ENCODE measurements at regions of chr6 and their contacts with region 1.

Region 1: GRCh38 chr6:56370561-56371211 is 123.3 kb upstream of the COL21A1 start:
- DNase-seq: peak; percentile 99
- H3K4me3 ChIP-seq: peak overlapping the region in 1 of 3 experiments; percentile 52
- H3K27ac ChIP-seq: peak overlapping the region; percentile 99
- H3K4me1 ChIP-seq: peaks cover 57% of the 10 kb centered on the region
- H3K27me3 ChIP-seq: no peaks in the 10 kb centered on the region
- CTCF ChIP-seq: no peak
- POLR2A ChIP-seq: no peak

Region 2: DNA sequence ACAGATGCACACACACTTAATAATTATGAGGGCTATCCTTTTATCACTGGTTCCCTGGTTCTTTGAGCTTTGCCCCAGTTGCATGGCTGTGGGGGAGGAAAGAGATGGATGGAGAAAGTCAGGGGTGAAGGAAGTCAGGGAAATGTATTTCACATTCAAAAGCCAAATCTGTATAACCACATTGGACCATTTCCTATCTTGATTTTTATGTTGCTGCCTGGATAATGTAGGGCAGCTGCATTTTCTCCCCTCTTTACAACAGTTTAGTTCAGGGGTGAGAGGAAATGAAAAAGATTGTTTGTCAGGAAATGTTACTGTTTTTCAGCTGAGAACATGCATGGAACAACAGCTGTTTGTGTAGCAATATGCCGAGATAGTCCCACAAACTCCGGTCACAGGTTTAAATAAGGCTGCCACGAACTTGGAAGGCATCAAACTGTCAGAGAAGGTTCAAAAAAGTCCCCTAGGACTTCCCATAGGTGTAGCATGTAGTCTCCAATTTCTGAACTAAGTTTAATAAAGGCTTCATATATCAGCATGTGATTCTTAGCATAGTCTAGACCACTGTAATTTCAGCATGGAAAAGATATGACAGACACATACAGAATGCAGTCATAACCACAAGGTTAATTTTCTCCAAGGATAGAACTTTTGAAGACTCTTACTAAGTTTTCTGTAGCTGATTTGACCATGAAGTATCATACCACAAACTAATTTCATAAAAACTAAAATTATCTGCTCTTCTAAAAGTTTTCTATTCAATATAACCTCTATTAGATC is 41.2 kb before region 1 on chr6:
- CTCF ChIA-PET with region 1: no interaction called
- POLR2A ChIA-PET with region 1: no interaction called
- dilution Hi-C with region 1: no loop called
- intact Hi-C with region 1: loop called (anchors 1 kb)
- DNase-seq: peak; percentile 97
- H3K4me3 ChIP-seq: peak overlapping the region in 1 of 3 experiments; percentile 41
- H3K27ac ChIP-seq: peak overlapping the region; percentile 60
- H3K4me1 ChIP-seq: peaks cover 21% of the 10 kb centered on the region
- H3K27me3 ChIP-seq: no peaks in the 10 kb centered on the region
- CTCF ChIP-seq: no peak
- POLR2A ChIP-seq: peak; percentile 49

Region 3: DNA sequence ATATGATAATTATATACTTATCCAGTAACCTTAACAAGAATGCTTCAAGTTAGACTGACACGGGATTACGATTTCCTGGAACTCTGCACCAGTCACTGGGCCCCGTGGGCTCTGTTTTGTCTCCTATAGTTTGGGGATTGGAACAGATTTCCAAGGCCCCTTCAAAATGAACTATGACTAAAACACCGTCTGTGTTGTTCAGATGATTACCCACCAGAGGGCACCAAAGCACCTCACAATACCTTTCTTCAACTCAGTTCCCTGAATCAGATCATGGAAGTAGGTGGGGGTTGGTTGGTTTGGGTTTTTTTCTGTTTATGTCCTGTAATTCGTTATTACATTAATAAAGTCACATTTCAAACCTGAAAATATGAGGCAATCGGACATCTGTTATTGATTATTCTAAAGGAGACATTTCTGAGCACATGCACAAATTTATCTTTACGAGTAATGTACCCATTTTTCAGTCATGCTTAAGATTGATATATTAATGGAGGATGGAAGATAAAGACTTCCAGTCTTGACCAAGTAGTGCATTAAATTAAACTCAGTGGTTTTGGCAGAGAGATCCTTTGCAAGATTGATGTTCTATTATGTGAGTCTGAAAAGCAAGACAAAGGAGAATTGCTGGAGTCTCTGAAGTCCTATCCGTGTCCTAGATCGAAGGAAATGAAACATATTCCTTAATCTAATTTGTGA is 11.3 kb before region 1 on chr6:
- CTCF ChIA-PET with region 1: interaction called, 19 read pairs
- POLR2A ChIA-PET with region 1: interaction called, 5 read pairs
- dilution Hi-C with region 1: no loop called
- intact Hi-C with region 1: loop called (anchors 1 kb)
- DNase-seq: peak; percentile 83
- H3K4me3 ChIP-seq: no peak overlapping the region
- H3K27ac ChIP-seq: no peak overlapping the region
- H3K4me1 ChIP-seq: peaks cover 47% of the 10 kb centered on the region
- H3K27me3 ChIP-seq: no peaks in the 10 kb centered on the region
- CTCF ChIP-seq: peak; percentile 55 to 59
- POLR2A ChIP-seq: no peak

Region 4: GRCh38 chr6:56451165-56451739 is 80.6 kb after region 1 on chr6:
- CTCF ChIA-PET with region 1: interaction called, 14 read pairs
- POLR2A ChIA-PET with region 1: no interaction called
- dilution Hi-C with region 1: no loop called
- intact Hi-C with region 1: loop called (anchors 5 kb)
- DNase-seq: peak; percentile 43
- H3K4me3 ChIP-seq: no peak overlapping the region
- H3K27ac ChIP-seq: no peak overlapping the region
- H3K4me1 ChIP-seq: peaks cover 10% of the 10 kb centered on the region
- H3K27me3 ChIP-seq: no peaks in the 10 kb centered on the region
- CTCF ChIP-seq: no peak
- POLR2A ChIP-seq: no peak

Region 5: DNA sequence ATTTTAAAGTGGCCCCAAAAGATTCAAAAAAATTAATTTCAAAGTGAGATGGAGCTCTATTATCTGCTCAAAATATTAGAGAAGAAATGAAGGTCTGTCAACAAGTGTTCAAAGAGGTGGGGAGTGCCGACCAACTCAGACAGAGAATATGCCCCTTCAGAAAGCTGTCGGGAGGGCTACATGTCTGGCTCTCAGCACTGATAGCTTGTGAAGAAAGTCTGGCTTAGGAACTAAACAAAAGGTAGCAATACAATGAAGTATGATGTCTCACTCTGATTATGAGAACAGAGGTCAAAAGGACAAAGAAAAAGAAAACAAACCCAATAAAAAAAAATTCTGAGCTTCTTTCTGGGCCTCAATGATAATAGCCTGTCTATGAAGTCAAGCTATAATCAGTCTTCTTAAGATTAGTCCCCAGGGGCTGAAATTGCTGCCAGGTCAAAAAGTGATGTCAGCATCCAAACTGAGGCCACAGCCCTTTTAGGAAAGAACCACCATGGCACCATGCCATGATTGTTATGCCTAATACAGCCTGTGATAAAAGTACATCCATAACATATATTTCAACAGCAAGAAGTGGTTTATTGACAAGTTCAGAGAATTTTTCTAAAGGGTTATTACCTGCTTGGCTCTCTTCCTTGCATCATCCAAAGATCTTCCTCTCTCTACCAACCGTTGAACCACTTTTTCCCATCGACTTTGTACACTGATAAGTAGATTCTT is 121.1 kb after region 1 on chr6:
- CTCF ChIA-PET with region 1: interaction called, 20 read pairs
- POLR2A ChIA-PET with region 1: no interaction called
- dilution Hi-C with region 1: no loop called
- intact Hi-C with region 1: loop called (anchors 1 kb)
- DNase-seq: peak; percentile 88
- H3K4me3 ChIP-seq: no peak overlapping the region
- H3K27ac ChIP-seq: peak overlapping the region; percentile 89
- H3K4me1 ChIP-seq: peaks cover 26% of the 10 kb centered on the region
- H3K27me3 ChIP-seq: no peaks in the 10 kb centered on the region
- CTCF ChIP-seq: no peak
- POLR2A ChIP-seq: no peak

Region 6: GRCh38 chr6:56542364-56543331 is 172.0 kb after region 1 on chr6:
- CTCF ChIA-PET with region 1: interaction called, 42 read pairs
- POLR2A ChIA-PET with region 1: no interaction called
- dilution Hi-C with region 1: no loop called
- intact Hi-C with region 1: loop called (anchors 1 kb)
- DNase-seq: peak; percentile 97
- H3K4me3 ChIP-seq: peak overlapping the region; percentile 41 to 84 (median 66)
- H3K27ac ChIP-seq: peak overlapping the region; percentile 80
- H3K4me1 ChIP-seq: peaks cover 41% of the 10 kb centered on the region
- H3K27me3 ChIP-seq: no peaks in the 10 kb centered on the region
- CTCF ChIP-seq: peak in 1 of 2 donors; percentile 22
- POLR2A ChIP-seq: peak; percentile 82

Region 7: DNA sequence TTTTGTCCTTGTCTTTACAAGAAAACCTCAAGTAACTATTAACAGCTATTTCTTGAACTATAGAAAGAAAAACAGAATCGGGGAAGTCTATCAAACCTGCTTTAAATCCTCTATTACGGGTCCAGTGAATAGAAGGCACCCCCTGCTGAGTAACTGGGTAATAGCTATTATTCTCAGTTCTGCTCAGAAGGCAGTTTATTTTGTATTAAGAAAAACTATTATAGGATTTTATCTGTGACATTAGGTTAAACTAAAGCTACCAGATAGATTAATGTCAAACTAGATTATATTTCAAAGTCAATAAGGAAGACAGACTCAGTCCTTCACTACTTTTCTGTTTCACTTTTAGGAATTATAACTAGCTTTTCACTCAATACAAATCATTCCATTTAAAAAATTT is 178.3 kb after region 1 on chr6:
- CTCF ChIA-PET with region 1: interaction called, 42 read pairs
- POLR2A ChIA-PET with region 1: no interaction called
- dilution Hi-C with region 1: no loop called
- intact Hi-C with region 1: loop called (anchors 1 kb)
- DNase-seq: peak; percentile 64
- H3K4me3 ChIP-seq: no peak overlapping the region
- H3K27ac ChIP-seq: no peak overlapping the region
- H3K4me1 ChIP-seq: no peaks in the 10 kb centered on the region
- H3K27me3 ChIP-seq: no peaks in the 10 kb centered on the region
- CTCF ChIP-seq: peak in 1 of 2 donors; percentile 32
- POLR2A ChIP-seq: no peak